B cell (primary cell): ENCODE measurements at regions of chr2 and their contacts with region 1.

Region 1: DNA sequence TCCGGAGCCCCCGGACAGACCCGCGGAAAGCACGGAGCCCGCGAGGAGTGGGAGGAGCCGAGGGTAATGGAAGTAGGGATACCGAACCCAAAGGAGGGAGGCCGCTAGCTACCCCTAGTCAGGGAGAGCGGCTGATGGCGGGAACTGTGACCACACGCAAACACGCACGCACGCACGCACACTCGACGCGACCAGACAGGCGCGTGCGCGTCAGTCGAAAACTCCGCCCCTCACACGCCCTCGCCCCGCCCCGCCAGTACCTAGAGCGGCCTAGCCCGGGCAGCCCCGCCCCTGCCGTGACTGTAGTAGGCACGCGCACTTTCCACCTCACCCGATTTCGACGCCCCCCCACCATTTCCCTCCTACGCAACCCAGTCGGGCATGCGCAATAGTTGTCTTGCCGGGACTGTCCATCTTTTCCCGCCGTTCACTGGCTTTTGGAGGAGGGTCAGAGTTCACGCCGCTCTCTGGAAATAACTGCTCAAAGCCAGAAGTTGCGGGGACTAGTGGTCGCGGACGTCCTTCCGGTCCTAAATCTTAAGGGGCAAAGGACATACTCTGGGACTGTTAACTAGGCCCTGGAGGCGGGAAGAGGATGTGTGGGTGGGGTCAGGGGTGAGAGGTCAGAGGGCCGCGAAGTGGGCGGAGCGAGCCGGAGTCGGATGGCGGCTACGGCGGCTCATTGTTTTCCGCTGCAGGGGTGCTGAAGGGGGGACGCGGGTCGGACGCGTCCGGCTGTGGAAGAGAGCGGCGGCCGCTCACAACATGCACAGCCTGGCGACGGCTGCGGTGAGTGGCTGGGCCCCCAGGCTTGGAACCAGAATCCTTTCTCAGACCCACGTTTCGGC is at the starts of genes CNOT9 and USP37:
- DNase-seq: peak; percentile 100
- ATAC-seq: peak; percentile 92
- H3K4me3 ChIP-seq: peak within 1 kb of the TSS; percentile 65 to 91 (median 84)
- H3K4me3 Mint-ChIP-seq: peak within 1 kb of the TSS; percentile 96
- H3K27ac ChIP-seq: peak within 1 kb of the TSS; percentile 93 to 95
- H3K27ac Mint-ChIP-seq: peak within 1 kb of the TSS; percentile 100
- H3K4me1 ChIP-seq: peaks cover 29 to 31% of the 10 kb centered on the region in 2 donors
- H3K4me1 Mint-ChIP-seq: peaks cover 56% of the 10 kb centered on the region
- H3K27me3 ChIP-seq: no peaks in the 10 kb centered on the region
- H3K27me3 Mint-ChIP-seq: no peaks in the 10 kb centered on the region
- CTCF ChIP-seq: no peak
- total RNA-seq, gene CNOT9: 54.5 and 66.9 TPM in 2 replicates
- total RNA-seq, gene USP37: 29.0 and 32.4 TPM in 2 replicates

Region 2: DNA sequence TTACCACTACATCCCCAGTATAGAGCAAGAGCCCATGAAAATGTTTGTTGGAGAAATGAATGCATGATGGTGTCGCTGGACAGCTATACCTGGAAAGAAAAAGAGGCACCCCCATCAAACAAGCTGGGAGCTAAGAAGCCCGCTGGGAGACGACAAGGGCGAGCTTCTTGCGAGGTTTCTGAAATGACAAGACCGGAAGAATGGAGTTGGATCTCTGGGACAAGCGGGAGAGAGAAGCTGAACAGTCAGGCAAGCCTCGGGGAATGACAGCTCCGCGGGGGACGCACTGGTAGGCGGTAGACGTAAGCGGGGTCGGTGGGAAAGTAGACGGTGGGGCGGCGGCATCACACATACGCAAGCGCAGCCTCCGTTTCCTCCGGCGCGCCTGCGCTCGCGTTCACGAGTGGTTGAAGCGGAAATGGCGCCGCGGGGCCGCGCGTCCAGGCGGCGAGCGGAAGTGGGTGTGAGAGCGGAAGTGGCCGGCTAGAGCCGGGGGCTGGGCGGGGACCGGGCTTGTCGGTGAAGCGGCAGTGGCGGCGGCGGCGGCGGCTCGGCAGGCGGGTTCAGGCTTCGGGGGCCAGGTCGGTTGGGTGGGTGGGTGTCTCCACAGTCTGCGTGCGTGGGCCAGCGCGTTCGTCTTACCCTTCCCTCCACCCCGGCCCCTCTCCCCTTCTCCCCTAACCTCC is 351.6 kb before region 1 on chr2 and contains the start of gene ARPC2:
- CTCF ChIA-PET with region 1: no interaction called
- POLR2A ChIA-PET with region 1: no interaction called
- intact Hi-C with region 1: loop called (anchors 1 kb)
- DNase-seq: peak; percentile 98
- ATAC-seq: peak; percentile 74
- H3K4me3 ChIP-seq: peak within 1 kb of the TSS; percentile 93 to 99 (median 97)
- H3K4me3 Mint-ChIP-seq: peak within 1 kb of the TSS; percentile 90
- H3K27ac ChIP-seq: peak within 1 kb of the TSS; percentile 95 to 99
- H3K27ac Mint-ChIP-seq: peak within 1 kb of the TSS; percentile 94
- H3K4me1 ChIP-seq: peaks cover 36 to 45% of the 10 kb centered on the region in 2 donors
- H3K4me1 Mint-ChIP-seq: peaks cover 43% of the 10 kb centered on the region
- H3K27me3 ChIP-seq: no peaks in the 10 kb centered on the region
- H3K27me3 Mint-ChIP-seq: no peaks in the 10 kb centered on the region
- CTCF ChIP-seq: no peak
- total RNA-seq, gene ARPC2: 343 and 352 TPM in 2 replicates

Region 3: DNA sequence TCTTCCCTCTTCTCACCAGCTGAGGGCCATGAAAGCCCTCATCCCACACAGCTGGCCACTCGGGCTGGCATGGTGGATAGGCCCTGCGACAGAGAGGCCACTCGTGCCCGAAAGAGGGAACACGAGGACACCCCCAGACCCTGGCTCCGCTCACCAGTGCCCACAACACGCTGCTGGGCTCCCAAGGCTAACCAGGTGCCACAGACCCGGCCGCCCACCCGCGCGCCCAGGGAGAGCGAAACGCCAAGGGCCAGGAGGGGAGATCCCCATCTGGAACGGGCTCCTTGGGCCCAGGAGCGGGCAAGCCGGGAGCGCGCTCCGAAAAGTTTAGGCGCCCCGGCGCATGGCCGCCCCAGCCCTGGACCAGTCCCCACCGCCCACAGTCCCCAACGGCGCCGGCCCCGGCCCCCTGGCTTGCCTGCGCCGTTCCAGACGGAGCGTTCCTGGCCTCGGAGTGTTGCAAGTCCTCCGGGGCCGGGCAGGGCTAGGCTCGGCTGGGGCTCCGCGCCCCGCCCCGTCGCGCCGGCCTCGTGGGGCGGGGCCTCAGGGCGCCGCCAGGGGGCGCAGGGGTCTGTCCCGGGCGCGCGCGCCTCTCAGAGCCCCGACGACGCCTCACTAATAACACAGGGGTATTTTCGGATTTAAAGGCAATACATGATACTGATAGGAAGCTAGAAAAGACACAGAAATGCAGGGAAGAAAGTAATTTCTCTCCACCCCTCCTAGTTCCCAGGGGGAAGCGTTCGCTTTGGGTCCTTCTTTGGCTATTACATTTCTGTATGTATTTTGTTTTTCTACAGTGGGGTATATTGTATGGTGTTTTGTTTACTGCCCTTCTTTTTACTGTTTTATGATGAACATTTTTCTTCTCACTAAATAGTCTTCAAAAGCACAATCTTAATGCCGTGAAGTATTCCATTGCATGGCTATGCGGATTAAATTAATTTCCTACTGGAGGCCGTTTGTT is 276.1 kb before region 1 on chr2 and contains the start of gene TMBIM1:
- CTCF ChIA-PET with region 1: no interaction called
- POLR2A ChIA-PET with region 1: no interaction called
- intact Hi-C with region 1: loop called (anchors 2 kb)
- DNase-seq: peak; percentile 90
- ATAC-seq: peak; percentile 72
- H3K4me3 ChIP-seq: peak within 1 kb of the TSS; percentile 50 to 95 (median 87)
- H3K4me3 Mint-ChIP-seq: peak within 1 kb of the TSS; percentile 89
- H3K27ac ChIP-seq: peak within 1 kb of the TSS; percentile 92 to 98
- H3K27ac Mint-ChIP-seq: peak within 1 kb of the TSS; percentile 93
- H3K4me1 ChIP-seq: peaks cover 57 to 71% of the 10 kb centered on the region in 2 donors
- H3K4me1 Mint-ChIP-seq: peaks cover 60% of the 10 kb centered on the region
- H3K27me3 ChIP-seq: no peaks in the 10 kb centered on the region
- H3K27me3 Mint-ChIP-seq: no peaks in the 10 kb centered on the region
- CTCF ChIP-seq: peak; percentile 90
- total RNA-seq, gene TMBIM1: 128 and 137 TPM in 2 replicates

Region 4: GRCh38 chr2:218406209-218406948 is 162.0 kb before region 1 on chr2:
- CTCF ChIA-PET with region 1: no interaction called
- POLR2A ChIA-PET with region 1: no interaction called
- intact Hi-C with region 1: loop called (anchors 1 kb)
- DNase-seq: peak; percentile 93
- ATAC-seq: peak; percentile 81
- H3K4me3 ChIP-seq: peak overlapping the region; percentile 15 to 72 (median 53)
- H3K4me3 Mint-ChIP-seq: peak overlapping the region; percentile 88
- H3K27ac ChIP-seq: peak overlapping the region; percentile 62 to 82
- H3K27ac Mint-ChIP-seq: peak overlapping the region; percentile 90
- H3K4me1 ChIP-seq: peaks cover 30 to 48% of the 10 kb centered on the region in 2 donors
- H3K4me1 Mint-ChIP-seq: peaks cover 47% of the 10 kb centered on the region
- H3K27me3 ChIP-seq: no peaks in the 10 kb centered on the region
- H3K27me3 Mint-ChIP-seq: no peaks in the 10 kb centered on the region
- CTCF ChIP-seq: peak; percentile 69

Region 5: DNA sequence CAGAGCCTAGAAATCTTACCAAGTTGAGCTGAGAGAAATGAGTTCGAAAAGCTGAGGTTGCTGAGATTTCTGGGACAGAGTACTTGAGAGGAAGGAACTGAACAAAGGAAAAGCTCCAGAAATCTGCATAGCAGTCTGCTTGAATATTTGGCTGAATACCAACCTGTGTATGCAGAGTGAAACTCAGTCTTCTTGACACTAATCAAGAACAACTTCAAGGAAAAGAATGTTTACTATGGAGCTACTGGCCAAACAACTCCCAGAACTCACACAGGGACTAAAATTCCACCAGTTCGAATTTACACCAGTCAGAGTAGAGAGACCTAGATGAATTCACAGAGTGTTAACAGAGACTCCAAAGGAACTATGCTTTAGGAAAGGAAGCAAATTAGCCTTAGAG is 66.7 kb before region 1 on chr2:
- CTCF ChIA-PET with region 1: no interaction called
- POLR2A ChIA-PET with region 1: no interaction called
- intact Hi-C with region 1: no loop called
- DNase-seq: no peak
- ATAC-seq: no peak
- H3K4me3 ChIP-seq: no peak overlapping the region
- H3K4me3 Mint-ChIP-seq: no peak overlapping the region
- H3K27ac ChIP-seq: no peak overlapping the region
- H3K27ac Mint-ChIP-seq: no peak overlapping the region
- H3K4me1 ChIP-seq: no peaks in the 10 kb centered on the region
- H3K4me1 Mint-ChIP-seq: peaks cover 2% of the 10 kb centered on the region
- H3K27me3 ChIP-seq: no peaks in the 10 kb centered on the region
- H3K27me3 Mint-ChIP-seq: no peaks in the 10 kb centered on the region
- CTCF ChIP-seq: no peak

Region 6: GRCh38 chr2:218659258-218659987 is 91.0 kb after region 1 on chr2 and contains the starts of genes BCS1L and ZNF142:
- CTCF ChIA-PET with region 1: interaction called, 3 read pairs
- POLR2A ChIA-PET with region 1: no interaction called
- intact Hi-C with region 1: loop called (anchors 1 kb)
- DNase-seq: peak; percentile 91
- ATAC-seq: peak; percentile 97
- H3K4me3 ChIP-seq: peak within 1 kb of the TSS; percentile 65 to 93 (median 81)
- H3K4me3 Mint-ChIP-seq: peak within 1 kb of the TSS; percentile 99
- H3K27ac ChIP-seq: peak within 1 kb of the TSS; percentile 46 to 77
- H3K27ac Mint-ChIP-seq: peak within 1 kb of the TSS; percentile 95
- H3K4me1 ChIP-seq: peaks cover 12 to 16% of the 10 kb centered on the region in 2 donors
- H3K4me1 Mint-ChIP-seq: peaks cover 28% of the 10 kb centered on the region
- H3K27me3 ChIP-seq: no peaks in the 10 kb centered on the region
- H3K27me3 Mint-ChIP-seq: no peaks in the 10 kb centered on the region
- CTCF ChIP-seq: no peak
- total RNA-seq, gene BCS1L: 56.1 and 60.1 TPM in 2 replicates
- total RNA-seq, gene ZNF142: 51.1 and 56.1 TPM in 2 replicates

Region 7: DNA sequence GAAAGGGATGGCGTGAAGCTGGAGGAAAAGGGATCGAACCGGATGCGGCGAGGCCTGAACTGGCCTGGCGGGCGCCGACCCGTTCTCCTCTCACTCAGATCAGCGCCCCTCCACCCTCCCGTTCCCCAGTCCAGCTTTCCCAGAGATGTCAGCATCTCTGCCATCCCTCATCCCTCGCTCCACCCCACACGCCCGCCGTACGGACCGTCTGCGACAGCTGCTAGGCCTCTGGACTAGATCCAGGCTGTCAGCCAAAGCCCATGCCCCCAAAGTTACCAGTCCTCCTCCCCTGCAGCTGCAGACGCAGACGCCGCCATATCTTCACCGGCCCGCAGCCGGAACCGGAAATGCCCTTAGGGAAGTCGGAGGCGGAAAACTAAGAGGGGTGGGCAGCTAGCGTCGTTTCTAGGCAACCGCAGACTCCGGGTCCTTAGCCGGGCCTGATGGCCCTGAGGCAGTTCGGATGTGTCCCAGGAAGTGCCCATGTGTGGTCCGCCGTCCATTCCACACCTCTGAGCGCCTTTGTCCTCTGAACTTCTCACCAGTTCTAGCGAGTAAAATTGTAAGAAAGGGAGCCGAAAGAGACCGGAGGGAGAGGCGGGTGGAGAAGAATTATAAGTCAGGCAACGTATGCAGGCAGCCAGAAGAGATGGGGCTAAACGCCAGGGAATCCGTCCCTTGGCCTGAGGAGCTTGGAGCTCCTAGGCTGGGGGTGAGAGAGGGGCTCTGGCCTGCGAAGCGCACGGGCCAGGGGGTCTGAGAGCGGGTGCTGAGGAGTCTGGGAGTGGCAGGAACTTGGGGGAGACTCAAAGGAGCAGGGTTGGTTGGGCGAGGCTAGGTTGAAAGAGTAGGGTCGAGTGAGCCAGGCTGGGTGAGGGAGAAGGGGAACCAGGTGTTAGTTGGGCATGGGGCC is 103.5 kb after region 1 on chr2 and contains the starts of genes RNF25 and STK36:
- CTCF ChIA-PET with region 1: no interaction called
- POLR2A ChIA-PET with region 1: no interaction called
- intact Hi-C with region 1: loop called (anchors 5 kb)
- DNase-seq: peak; percentile 85
- ATAC-seq: peak; percentile 95
- H3K4me3 ChIP-seq: peak within 1 kb of the TSS; percentile 66 to 96 (median 84)
- H3K4me3 Mint-ChIP-seq: peak within 1 kb of the TSS; percentile 97
- H3K27ac ChIP-seq: peak within 1 kb of the TSS; percentile 8 to 84
- H3K27ac Mint-ChIP-seq: peak within 1 kb of the TSS; percentile 91
- H3K4me1 ChIP-seq: peaks cover 14 to 15% of the 10 kb centered on the region in 2 donors
- H3K4me1 Mint-ChIP-seq: peaks cover 20% of the 10 kb centered on the region
- H3K27me3 ChIP-seq: no peaks in the 10 kb centered on the region
- H3K27me3 Mint-ChIP-seq: no peaks in the 10 kb centered on the region
- CTCF ChIP-seq: no peak
- total RNA-seq, gene RNF25: 31.7 and 31.8 TPM in 2 replicates
- total RNA-seq, gene STK36: 41.3 and 42.9 TPM in 2 replicates

Region 8: GRCh38 chr2:218870984-218871344 is 302.6 kb after region 1 on chr2:
- CTCF ChIA-PET with region 1: no interaction called
- POLR2A ChIA-PET with region 1: no interaction called
- intact Hi-C with region 1: no loop called
- DNase-seq: no peak
- ATAC-seq: peak; percentile 7
- H3K4me3 ChIP-seq: peak overlapping the region in 4 of 5 experiments; percentile 45 to 65 (median 58)
- H3K4me3 Mint-ChIP-seq: peak overlapping the region; percentile 92
- H3K27ac ChIP-seq: no peak overlapping the region
- H3K27ac Mint-ChIP-seq: no peak overlapping the region
- H3K4me1 ChIP-seq: peaks cover 31 to 32% of the 10 kb centered on the region in 2 donors
- H3K4me1 Mint-ChIP-seq: peaks cover 36% of the 10 kb centered on the region
- H3K27me3 ChIP-seq: peaks cover 0 to 52% (median 16%) of the 10 kb centered on the region in 4 experiments
- H3K27me3 Mint-ChIP-seq: peaks cover 34% of the 10 kb centered on the region
- CTCF ChIP-seq: no peak

Region 9: GRCh38 chr2:219498280-219499057 is 930.1 kb after region 1 on chr2 and contains the start of gene GMPPA:
- CTCF ChIA-PET with region 1: no interaction called
- POLR2A ChIA-PET with region 1: no interaction called
- intact Hi-C with region 1: loop called (anchors 2 kb)
- DNase-seq: peak; percentile 94
- ATAC-seq: peak; percentile 96
- H3K4me3 ChIP-seq: peak within 1 kb of the TSS; percentile 65 to 90 (median 79)
- H3K4me3 Mint-ChIP-seq: peak within 1 kb of the TSS; percentile 93
- H3K27ac ChIP-seq: peak within 1 kb of the TSS in 1 of 2 donors; percentile 84
- H3K27ac Mint-ChIP-seq: peak within 1 kb of the TSS; percentile 87
- H3K4me1 ChIP-seq: peaks cover 38% of the 10 kb centered on the region in 2 donors
- H3K4me1 Mint-ChIP-seq: peaks cover 32% of the 10 kb centered on the region
- H3K27me3 ChIP-seq: peaks cover 0 to 46% (median 23%) of the 10 kb centered on the region in 4 experiments
- H3K27me3 Mint-ChIP-seq: peaks cover 33% of the 10 kb centered on the region
- CTCF ChIP-seq: no peak
- total RNA-seq, gene GMPPA: 27.8 and 32.0 TPM in 2 replicates